ENCODE measurements at regions of chrX and their contacts with region 1.

Region 1: GRCh38 chrX:31993649-31994048 is 921.8 kb upstream of the FTHL17 start:
- DNase-seq: no peak
- ATAC-seq: no peak
- H3K4me3 ChIP-seq: no peak overlapping the region
- H3K27ac ChIP-seq: no peak overlapping the region
- H3K4me1 ChIP-seq: no peaks in the 10 kb centered on the region
- H3K27me3 ChIP-seq: no peaks in the 10 kb centered on the region
- CTCF ChIP-seq: no peak
- POLR2A ChIP-seq: no peak

Region 2: GRCh38 chrX:32024072-32024471 is 30.4 kb after region 1 on chrX:
- intact Hi-C with region 1: loop called in 1 of 10 experiments (anchors 2 kb)
- DNase-seq: no peak
- ATAC-seq: no peak
- H3K4me3 ChIP-seq: no peak overlapping the region
- H3K27ac ChIP-seq: no peak overlapping the region
- H3K4me1 ChIP-seq: no peaks in the 10 kb centered on the region
- H3K27me3 ChIP-seq: no peaks in the 10 kb centered on the region
- CTCF ChIP-seq: no peak
- POLR2A ChIP-seq: no peak

Region 3: GRCh38 chrX:32045149-32045548 is 51.5 kb after region 1 on chrX:
- intact Hi-C with region 1: loop called in 1 of 10 experiments (anchors 5 kb)
- DNase-seq: no peak
- ATAC-seq: no peak
- H3K4me3 ChIP-seq: no peak overlapping the region
- H3K27ac ChIP-seq: no peak overlapping the region
- H3K4me1 ChIP-seq: no peaks in the 10 kb centered on the region
- H3K27me3 ChIP-seq: no peaks in the 10 kb centered on the region
- CTCF ChIP-seq: no peak
- POLR2A ChIP-seq: no peak

Region 4: DNA sequence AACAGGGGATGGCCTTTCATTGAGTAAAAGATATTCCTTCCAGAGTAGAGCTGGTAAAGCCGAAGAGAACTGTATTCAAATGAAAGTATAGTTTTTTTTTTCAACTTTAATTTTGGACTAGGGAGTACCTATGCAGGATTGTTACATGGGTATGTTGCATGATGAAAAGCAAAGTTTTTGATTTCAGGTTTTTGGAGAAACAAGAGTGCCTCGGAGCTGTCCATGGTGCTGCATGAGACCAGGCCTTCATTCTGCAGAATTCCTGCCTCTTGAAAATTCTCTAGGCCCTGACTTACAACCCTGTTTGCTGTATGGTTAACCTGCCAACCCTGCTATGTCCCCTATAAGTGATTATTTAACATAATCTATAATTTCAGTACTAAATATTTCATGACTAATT is 143.9 kb after region 1 on chrX:
- intact Hi-C with region 1: no loop called
- DNase-seq: peak in 1 of 5 donors; percentile 3
- ATAC-seq: no peak
- H3K4me3 ChIP-seq: no peak overlapping the region
- H3K27ac ChIP-seq: no peak overlapping the region
- H3K4me1 ChIP-seq: no peaks in the 10 kb centered on the region
- H3K27me3 ChIP-seq: no peaks in the 10 kb centered on the region
- CTCF ChIP-seq: no peak
- POLR2A ChIP-seq: no peak